Activated CD4-positive, alpha-beta T cell treated with anti-CD3 and anti-CD28 coated beads, Interleukin-2, amount 10 ng/mL, durations not matched to agents 24 days and 14 days (primary cell): ENCODE measurements at regions of chr11 and their contacts with region 1.

Region 1: DNA sequence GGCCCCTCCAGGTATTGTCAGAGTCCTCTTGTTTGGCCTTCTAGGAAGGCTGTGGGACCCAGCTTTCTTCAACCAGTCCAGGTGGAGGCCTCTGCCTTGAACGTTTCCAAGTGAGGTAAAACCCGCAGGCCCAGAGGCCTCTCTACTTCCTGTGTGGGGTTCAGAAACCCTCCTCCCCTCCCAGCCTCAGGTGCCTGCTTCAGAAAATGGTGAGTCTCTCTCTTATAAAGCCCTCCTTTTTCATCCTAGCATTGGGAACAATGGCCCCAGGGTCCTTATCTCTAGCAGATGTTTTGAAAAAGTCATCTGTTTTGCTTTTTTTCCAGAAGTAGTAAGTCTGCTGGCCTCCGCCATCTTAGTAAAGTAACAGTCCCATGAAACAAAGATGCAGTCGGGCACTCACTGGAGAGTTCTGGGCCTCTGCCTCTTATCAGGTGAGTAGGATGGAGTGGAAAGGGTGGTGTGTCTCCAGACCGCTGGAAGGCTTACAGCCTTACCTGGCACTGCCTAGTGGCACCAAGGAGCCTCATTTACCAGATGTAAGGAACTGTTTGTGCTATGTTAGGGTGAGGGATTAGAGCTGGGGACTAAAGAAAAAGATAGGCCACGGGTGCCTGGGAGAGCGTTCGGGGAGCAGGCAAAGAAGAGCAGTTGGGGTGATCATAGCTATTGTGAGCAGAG is at the start of gene CD3E:
- DNase-seq: peak; percentile 91
- H3K4me3 Mint-ChIP-seq: peak within 1 kb of the TSS; percentile 97
- H3K27ac Mint-ChIP-seq: peak within 1 kb of the TSS; percentile 99
- H3K4me1 Mint-ChIP-seq: peaks cover 50% of the 10 kb centered on the region
- H3K27me3 Mint-ChIP-seq: no peaks in the 10 kb centered on the region
- total RNA-seq, gene CD3E: 571 TPM in 2 replicates

Region 2: GRCh38 chr11:117985953-117986887 is 318.5 kb before region 1 on chr11 and contains the start of gene IL10RA:
- intact Hi-C with region 1: loop called (anchors 5 kb)
- DNase-seq: peak; percentile 98
- H3K4me3 Mint-ChIP-seq: peak within 1 kb of the TSS; percentile 88
- H3K27ac Mint-ChIP-seq: peak within 1 kb of the TSS; percentile 98
- H3K4me1 Mint-ChIP-seq: peaks cover 69% of the 10 kb centered on the region
- H3K27me3 Mint-ChIP-seq: no peaks in the 10 kb centered on the region
- total RNA-seq, gene IL10RA: 86.6 and 89.9 TPM in 2 replicates

Region 3: DNA sequence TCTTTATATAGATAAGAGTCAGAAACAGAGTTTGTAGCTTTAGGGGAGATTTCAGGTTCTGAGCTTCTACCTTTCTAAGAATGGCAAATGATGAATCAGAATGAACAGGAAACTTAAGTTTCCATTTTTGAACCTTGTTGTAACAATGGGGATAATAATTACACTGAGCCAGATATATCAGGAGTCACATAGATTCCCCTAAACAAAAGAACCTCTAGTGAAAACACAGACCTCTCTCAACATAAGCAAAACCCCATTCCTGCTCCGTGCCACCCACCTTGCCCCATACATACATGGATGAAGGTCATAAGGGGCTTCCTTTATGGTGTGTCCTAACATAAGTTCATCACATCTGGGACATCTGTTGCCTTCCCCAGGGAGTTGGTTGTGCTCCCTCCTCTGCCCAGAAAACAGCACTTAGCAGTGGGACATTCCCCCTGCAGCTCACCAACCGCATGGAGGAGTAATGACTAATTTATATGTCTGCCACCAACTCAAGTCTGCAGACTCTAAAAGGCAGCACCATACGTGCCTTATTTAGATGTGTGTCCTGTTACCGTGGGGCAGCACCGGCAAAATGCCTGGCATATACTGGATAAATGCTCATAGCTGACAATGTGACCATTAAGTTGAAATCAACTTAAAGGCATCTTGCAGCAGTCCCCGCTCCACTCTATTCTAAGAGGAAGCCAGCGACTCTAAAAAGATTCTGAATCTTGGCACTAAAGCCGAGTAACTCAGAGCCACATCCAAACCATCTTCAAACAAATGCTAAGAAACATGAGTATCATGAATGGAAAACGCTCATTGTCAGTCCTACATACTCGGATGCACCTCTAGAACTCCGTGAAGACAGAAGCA is 87.9 kb before region 1 on chr11:
- intact Hi-C with region 1: loop called (anchors 2 kb)
- DNase-seq: peak; percentile 84
- H3K4me3 Mint-ChIP-seq: peak overlapping the region; percentile 86
- H3K27ac Mint-ChIP-seq: peak overlapping the region; percentile 100
- H3K4me1 Mint-ChIP-seq: peaks cover 87% of the 10 kb centered on the region
- H3K27me3 Mint-ChIP-seq: no peaks in the 10 kb centered on the region

Region 4: DNA sequence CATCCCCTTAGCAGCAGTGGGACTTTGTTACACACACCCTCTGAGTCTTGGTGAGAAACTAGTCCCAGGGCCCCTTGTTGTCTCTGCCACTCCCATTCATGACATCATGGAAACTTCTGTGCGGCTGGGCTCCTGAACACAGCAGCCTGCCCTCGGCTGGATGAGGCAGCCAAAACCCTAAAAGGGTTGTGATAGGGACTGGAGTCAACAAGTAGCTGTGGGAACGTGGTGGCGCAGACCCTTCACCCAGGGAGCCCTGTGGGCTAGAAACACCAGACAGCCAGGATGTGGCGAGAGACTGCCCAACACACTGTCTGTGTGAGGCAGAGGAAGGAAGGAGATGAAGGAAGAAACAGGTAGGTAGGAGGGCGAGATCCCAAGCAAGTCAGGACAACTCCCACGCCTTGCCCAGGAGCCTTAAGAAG is 33.9 kb after region 1 on chr11:
- intact Hi-C with region 1: loop called (anchors 1 kb)
- DNase-seq: peak; percentile 97
- H3K4me3 Mint-ChIP-seq: peak overlapping the region; percentile 90
- H3K27ac Mint-ChIP-seq: peak overlapping the region; percentile 100
- H3K4me1 Mint-ChIP-seq: peaks cover 65% of the 10 kb centered on the region
- H3K27me3 Mint-ChIP-seq: no peaks in the 10 kb centered on the region

Region 5: GRCh38 chr11:118401151-118401878 is 96.6 kb after region 1 on chr11 and contains the start of gene ATP5MG:
- intact Hi-C with region 1: loop called (anchors 2 kb)
- DNase-seq: peak; percentile 98
- H3K4me3 Mint-ChIP-seq: peak within 1 kb of the TSS; percentile 96
- H3K27ac Mint-ChIP-seq: peak within 1 kb of the TSS; percentile 99
- H3K4me1 Mint-ChIP-seq: peaks cover 57% of the 10 kb centered on the region
- H3K27me3 Mint-ChIP-seq: no peaks in the 10 kb centered on the region
- total RNA-seq, gene ATP5MG: 220 and 228 TPM in 2 replicates

Region 6: GRCh38 chr11:118572061-118572980 is 267.6 kb after region 1 on chr11 and contains the start of gene ARCN1:
- intact Hi-C with region 1: loop called (anchors 5 kb)
- DNase-seq: peak; percentile 93
- H3K4me3 Mint-ChIP-seq: peak within 1 kb of the TSS; percentile 97
- H3K27ac Mint-ChIP-seq: peak within 1 kb of the TSS; percentile 93
- H3K4me1 Mint-ChIP-seq: peaks cover 34% of the 10 kb centered on the region
- H3K27me3 Mint-ChIP-seq: no peaks in the 10 kb centered on the region
- total RNA-seq, gene ARCN1: 147 and 150 TPM in 2 replicates